ENCODE measurements at regions of chr12 and their contacts with region 1.

Region 1: GRCh38 chr12:57621497-57622292 is 10.5 kb downstream of the ARHGEF25 start:
- DNase-seq: no peak
- ATAC-seq: peak; percentile 88
- H3K4me3 ChIP-seq: peak overlapping the region; percentile 18 to 53
- H3K27ac ChIP-seq: no peak overlapping the region
- H3K4me1 ChIP-seq: peaks cover 13% of the 10 kb centered on the region
- H3K27me3 ChIP-seq: no peaks in the 10 kb centered on the region
- CTCF ChIP-seq: peak; percentile 98

Region 2: DNA sequence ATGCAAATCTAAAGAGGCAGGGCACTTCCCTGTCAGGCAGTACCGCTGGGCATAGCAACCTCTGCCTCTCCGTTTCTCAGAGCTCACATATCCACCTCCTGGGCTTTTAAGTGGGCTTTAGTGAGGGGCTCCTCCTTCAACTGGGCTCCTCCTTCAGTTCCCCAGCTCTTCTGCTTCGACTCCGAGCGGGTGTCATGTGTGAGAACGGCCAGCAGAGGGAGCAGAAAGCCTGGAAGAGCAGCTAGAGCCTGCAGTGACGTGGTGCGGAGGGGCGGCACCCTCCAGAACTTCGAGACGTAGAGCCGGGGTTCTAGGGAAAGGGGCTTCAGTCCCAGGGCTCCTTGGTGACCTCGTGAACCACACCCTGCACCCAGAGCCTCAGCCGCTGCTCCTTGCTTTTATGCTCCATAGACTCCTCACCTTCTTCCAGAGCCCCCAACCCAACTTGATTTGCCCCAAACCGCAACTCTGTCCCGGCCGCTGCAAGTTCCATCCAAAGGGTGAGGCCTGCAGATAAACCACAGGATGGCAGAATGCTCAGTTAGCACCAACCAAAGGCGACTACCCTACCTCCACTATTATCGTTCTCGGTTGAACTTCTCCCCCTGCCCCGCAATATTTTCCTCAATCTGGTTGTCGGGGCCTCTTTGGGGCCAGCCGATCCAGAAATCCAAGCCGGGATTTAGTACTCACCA is 162.5 kb before region 1 on chr12:
- CTCF ChIA-PET with region 1: no interaction called
- POLR2A ChIA-PET with region 1: no interaction called
- in situ Hi-C with region 1: no loop called
- intact Hi-C with region 1: loop called (anchors 5 kb)
- DNase-seq: peak; percentile 91
- ATAC-seq: peak; percentile 73
- H3K4me3 ChIP-seq: peak overlapping the region; percentile 72 to 73
- H3K27ac ChIP-seq: peak overlapping the region; percentile 89
- H3K4me1 ChIP-seq: peaks cover 15% of the 10 kb centered on the region
- H3K27me3 ChIP-seq: no peaks in the 10 kb centered on the region
- CTCF ChIP-seq: peak; percentile 95

Region 3: GRCh38 chr12:57583008-57583831 is 38.5 kb before region 1 on chr12:
- CTCF ChIA-PET with region 1: interaction called, 6 read pairs
- POLR2A ChIA-PET with region 1: no interaction called
- in situ Hi-C with region 1: no loop called
- intact Hi-C with region 1: loop called (anchors 1 kb)
- DNase-seq: peak; percentile 53
- ATAC-seq: peak; percentile 97
- H3K4me3 ChIP-seq: no peak overlapping the region
- H3K27ac ChIP-seq: no peak overlapping the region
- H3K4me1 ChIP-seq: no peaks in the 10 kb centered on the region
- H3K27me3 ChIP-seq: no peaks in the 10 kb centered on the region
- CTCF ChIP-seq: peak; percentile 95

Measured in Panc1 (cell line).